ENCODE measurements at regions of chr19 and their contacts with region 1.

Region 1: DNA sequence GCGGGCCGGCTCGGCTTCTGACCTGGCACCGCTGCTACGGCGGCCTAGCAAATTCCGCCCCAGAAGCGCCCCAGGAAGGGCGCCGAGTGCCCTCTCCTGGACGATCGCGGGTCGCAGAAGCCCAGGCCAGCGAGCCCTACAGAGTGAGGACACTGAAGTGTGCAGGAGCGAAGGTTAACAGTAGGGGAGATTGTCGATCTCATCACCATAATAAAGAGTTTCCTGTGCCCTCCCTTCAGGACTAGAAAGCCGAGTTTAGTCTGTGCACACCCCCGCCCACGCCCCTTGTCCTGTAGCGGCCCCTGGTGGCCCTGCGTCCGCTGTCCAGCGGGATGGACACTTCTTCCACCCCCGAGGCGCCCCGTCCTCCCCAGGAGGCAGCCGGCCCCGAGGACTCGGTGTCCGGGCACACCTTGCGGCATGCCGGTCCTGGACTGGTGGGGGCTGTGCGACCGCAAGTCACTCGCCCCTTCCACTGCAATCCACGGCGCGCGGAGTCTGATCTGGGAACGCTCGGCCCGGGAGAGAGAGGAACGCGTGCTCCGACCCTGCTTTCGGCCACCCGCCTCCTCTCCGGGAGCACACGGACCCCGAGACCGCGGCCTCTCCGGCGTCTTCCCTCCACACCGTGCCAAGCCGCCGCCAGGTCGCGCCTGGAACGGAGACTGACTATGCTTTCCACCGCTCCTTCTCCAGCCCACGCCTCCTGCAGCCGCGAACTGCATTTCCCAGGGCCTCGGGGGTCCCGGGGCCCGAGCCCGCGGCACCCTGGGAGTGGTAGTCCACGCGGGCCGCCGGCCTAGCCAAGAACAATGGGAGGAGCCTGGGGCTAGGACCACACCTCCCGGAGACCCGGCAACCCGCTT is 769 bp upstream of the KMT2B start:
- DNase-seq: peak; percentile 98
- H3K4me3 ChIP-seq: peak overlapping the region; percentile 96
- H3K27ac ChIP-seq: peak overlapping the region; percentile 89
- H3K4me1 ChIP-seq: peaks cover 8% of the 10 kb centered on the region
- H3K27me3 ChIP-seq: no peaks in the 10 kb centered on the region
- CTCF ChIP-seq: peak; percentile 87

Region 2: DNA sequence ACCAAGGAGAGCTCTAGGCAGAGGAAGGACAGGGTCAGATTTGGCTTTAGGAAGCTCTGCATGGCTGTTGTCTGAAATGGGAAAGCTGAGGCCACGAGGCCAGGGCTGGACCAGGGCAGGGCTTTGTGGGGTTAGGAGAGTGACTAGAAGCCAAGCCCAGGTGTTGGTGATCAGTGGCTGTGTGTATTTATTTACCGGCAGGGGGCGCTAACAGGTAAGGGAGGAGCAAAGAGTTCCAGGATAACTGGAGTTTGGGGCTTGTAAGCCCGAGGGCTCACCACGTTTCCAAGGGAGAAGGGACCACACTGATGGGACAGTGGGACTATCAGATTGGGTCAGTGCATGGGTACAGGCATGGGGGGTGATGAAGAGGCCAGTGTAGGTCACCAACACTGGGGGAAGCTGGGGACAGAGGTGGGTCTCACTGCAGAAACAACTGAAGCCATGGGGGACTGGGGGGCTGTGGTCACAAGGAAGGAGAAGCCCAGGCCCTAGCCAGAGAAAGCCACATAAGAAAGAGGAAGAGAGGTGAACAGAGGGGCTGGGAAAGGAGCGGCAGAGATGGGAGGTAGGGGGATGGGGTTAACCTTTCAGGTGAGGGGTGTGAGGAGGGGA is 167.8 kb before region 1 on chr19:
- CTCF ChIA-PET with region 1: no interaction called
- POLR2A ChIA-PET with region 1: no interaction called
- intact Hi-C with region 1: loop called (anchors 2 kb)
- DNase-seq: peak; percentile 83
- H3K4me3 ChIP-seq: no peak overlapping the region
- H3K27ac ChIP-seq: no peak overlapping the region
- H3K4me1 ChIP-seq: peaks cover 10% of the 10 kb centered on the region
- H3K27me3 ChIP-seq: no peaks in the 10 kb centered on the region
- CTCF ChIP-seq: peak; percentile 87